Activated naive CD4-positive, alpha-beta T cell treated with anti-CD3 and anti-CD28 coated beads for 36 hours (primary cell): ENCODE measurements at regions of chr1 and their contacts with region 1.

Region 1: DNA sequence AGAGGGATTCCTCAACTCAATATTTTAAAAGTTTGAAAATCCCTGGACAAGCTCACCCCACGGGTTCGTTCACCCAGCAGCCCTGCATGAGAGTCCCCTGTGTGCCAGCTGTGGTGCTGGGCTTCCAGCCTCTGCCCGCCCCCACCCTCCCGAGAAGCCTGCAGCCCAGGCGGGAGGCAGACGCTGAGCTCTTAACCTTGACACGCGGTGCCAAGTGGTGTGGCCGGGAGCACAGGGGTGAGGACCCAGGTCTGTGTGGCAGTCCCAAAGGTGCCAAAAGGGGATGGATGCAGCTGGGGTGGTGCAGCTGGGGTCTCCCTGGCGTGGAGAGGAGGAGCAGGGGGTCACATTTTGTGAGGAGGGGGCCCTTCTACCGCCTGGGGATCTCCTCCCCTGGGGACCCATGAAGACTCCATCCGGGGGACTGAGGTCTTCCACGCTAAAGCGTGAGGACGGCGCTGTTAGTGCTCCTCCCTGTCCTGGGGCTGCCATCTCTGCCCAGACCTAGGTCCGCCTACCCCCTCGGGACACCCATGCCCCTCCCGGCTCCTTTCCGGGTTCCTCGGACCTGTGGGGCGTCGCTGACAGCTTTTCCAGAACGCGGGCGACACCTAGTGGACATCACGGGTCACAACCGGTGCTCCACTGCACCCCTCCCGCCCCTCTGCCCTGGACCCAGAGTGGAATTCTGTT is 12.9 kb downstream of the PLA2G2F start:
- DNase-seq: peak; percentile 85
- H3K4me3 Mint-ChIP-seq: peak overlapping the region; percentile 62
- H3K27ac Mint-ChIP-seq: no peak overlapping the region
- H3K4me1 Mint-ChIP-seq: peaks cover 9% of the 10 kb centered on the region
- H3K27me3 Mint-ChIP-seq: no peaks in the 10 kb centered on the region

Region 2: DNA sequence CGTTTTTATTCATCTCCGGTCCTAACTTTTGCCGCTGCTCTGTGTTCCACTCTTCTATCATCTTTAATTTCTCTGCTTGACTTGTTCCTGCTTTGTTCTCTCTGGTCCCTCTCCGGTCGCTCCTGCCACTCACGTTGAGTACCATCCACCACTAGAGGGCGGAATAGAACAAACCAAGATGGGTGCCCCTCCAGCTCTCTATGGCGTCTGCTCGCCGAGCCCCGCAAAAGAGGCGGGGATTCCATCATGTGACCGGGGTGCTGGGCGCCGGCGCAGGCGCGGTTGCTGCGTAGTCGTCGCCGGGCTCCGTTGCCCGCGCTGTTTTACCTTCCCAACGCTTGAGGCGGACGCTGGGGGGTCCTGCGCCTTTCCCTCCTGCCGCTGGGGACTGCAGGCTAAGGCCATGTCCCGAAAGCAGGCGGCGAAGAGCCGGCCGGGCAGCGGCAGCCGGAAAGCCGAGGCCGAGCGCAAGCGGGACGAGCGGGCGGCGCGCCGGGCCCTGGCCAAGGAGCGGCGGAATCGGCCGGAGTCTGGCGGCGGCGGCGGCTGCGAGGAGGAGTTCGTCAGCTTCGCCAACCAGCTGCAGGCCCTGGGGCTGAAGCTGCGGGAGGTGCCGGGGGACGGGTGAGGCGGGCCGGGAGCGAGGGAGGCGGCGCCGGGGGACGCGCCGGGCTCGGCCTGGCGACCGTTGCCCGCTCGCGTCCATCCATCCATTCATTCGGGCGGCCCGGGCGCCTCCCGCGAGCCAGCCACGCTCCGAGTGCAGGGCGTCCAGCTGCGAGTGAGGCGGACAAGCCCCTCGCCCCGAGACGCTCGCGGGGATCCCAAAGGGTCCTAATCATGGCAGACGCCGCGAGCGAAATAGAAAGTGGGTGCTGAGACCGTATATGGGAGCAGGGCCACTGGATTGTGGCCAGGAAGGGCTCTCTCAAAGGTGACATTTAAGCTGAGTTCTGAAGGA is 269.7 kb before region 1 on chr1 and contains the start of gene OTUD3:
- CTCF ChIA-PET with region 1: no interaction called
- intact Hi-C with region 1: loop called (anchors 1 kb)
- DNase-seq: peak; percentile 96
- H3K4me3 Mint-ChIP-seq: peak within 1 kb of the TSS; percentile 83
- H3K27ac Mint-ChIP-seq: peak within 1 kb of the TSS; percentile 42
- H3K4me1 Mint-ChIP-seq: peaks cover 37% of the 10 kb centered on the region
- H3K27me3 Mint-ChIP-seq: no peaks in the 10 kb centered on the region
- total RNA-seq, gene OTUD3: 8.3 to 10.8 TPM

Region 3: GRCh38 chr1:19918057-19918456 is 234.0 kb before region 1 on chr1:
- CTCF ChIA-PET with region 1: interaction called, 46 read pairs
- intact Hi-C with region 1: loop called (anchors 1 kb)
- DNase-seq: peak; percentile 93
- H3K4me3 Mint-ChIP-seq: no peak overlapping the region
- H3K27ac Mint-ChIP-seq: no peak overlapping the region
- H3K4me1 Mint-ChIP-seq: no peaks in the 10 kb centered on the region
- H3K27me3 Mint-ChIP-seq: peaks cover 2% of the 10 kb centered on the region

Region 4: DNA sequence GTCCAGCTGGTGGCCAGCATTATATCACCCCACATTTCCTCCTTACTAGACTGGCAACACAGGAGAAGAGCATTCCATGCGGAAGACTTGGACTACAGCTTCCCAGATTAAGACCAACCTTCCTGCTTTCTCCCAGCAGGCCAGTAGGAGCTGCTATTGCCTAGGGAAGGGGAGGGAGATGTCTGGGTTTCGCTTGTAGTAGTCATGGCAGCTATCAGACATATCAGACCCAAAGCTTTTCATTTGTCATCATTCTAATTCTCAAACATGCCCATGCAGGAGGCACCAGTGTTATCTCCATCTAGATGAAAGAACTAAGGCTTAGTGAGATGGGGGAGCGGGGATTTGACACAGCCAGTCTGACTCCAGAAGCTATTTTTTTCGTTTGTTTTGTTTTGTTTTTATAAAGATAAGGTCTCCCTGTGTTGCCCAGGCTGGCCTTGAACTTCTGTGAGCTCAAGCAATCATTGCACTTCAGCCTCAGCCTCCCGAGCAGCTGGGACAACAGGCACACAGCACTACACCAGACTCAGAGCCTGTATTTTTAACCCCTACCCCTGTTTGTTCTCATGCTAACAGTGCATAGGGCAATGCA is 177.1 kb before region 1 on chr1:
- CTCF ChIA-PET with region 1: interaction called, 11 read pairs
- intact Hi-C with region 1: loop called (anchors 1 kb)
- DNase-seq: peak; percentile 48
- H3K4me3 Mint-ChIP-seq: no peak overlapping the region
- H3K27ac Mint-ChIP-seq: no peak overlapping the region
- H3K4me1 Mint-ChIP-seq: no peaks in the 10 kb centered on the region
- H3K27me3 Mint-ChIP-seq: peaks cover 8% of the 10 kb centered on the region

Region 5: DNA sequence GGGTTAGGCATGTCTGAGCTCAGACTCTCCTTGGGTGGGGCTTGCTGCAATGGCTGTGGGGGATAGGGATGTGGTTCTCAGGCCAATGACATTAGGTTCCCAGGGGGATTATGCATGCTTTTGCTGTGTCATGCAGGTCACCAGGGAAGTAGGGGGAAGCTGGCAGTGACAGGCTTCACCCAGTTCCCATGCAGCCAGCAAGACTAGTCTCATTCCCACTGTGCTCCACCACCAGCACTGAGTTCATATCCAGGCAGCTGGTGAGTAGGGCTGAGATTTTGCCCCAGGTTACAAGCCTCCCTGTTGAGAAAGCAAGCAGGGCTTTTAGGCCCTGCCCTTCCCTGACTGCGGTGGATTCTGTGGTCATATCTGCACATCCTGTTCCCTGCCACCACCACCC is 114.2 kb before region 1 on chr1:
- CTCF ChIA-PET with region 1: no interaction called
- intact Hi-C with region 1: no loop called
- DNase-seq: no peak
- H3K4me3 Mint-ChIP-seq: no peak overlapping the region
- H3K27ac Mint-ChIP-seq: no peak overlapping the region
- H3K4me1 Mint-ChIP-seq: peaks cover 10% of the 10 kb centered on the region
- H3K27me3 Mint-ChIP-seq: peaks cover 5% of the 10 kb centered on the region

Region 6: GRCh38 chr1:20100632-20101355 is 51.3 kb before region 1 on chr1:
- CTCF ChIA-PET with region 1: interaction called, 12 read pairs
- intact Hi-C with region 1: loop called (anchors 1 kb)
- DNase-seq: peak; percentile 60
- H3K4me3 Mint-ChIP-seq: no peak overlapping the region
- H3K27ac Mint-ChIP-seq: no peak overlapping the region
- H3K4me1 Mint-ChIP-seq: peaks cover 8% of the 10 kb centered on the region
- H3K27me3 Mint-ChIP-seq: peaks cover 3% of the 10 kb centered on the region

Region 7: DNA sequence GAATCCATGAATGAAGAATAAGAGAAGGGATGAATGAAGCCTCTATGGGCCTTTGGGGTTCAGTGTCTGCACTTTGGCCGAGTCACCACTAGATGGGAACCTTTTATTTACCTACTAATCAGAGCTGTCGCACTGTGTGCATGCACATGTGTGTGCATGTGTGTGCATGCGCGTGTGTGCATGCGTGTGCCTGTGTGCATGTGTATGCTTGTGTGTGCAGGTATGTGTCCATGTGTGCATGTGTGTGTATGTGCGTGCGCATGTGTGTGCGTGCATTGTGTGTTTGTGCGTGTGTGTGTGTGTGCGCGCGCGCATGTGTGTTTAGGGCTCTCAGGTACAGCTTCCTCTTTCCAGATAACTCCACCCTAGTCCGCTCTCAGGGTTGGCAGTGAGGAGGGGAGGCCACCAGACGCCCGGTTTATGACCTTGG is 13.5 kb after region 1 on chr1:
- CTCF ChIA-PET with region 1: interaction called, 14 read pairs
- intact Hi-C with region 1: no loop called
- DNase-seq: peak; percentile 35
- H3K4me3 Mint-ChIP-seq: no peak overlapping the region
- H3K27ac Mint-ChIP-seq: no peak overlapping the region
- H3K4me1 Mint-ChIP-seq: no peaks in the 10 kb centered on the region
- H3K27me3 Mint-ChIP-seq: no peaks in the 10 kb centered on the region